ENCODE measurements at regions of chr1 and their contacts with region 1.

Region 1: GRCh38 chr1:33349778-33350610 is 29.1 kb upstream of the A3GALT2 start:
- DNase-seq: peak; percentile 80
- H3K4me3 Mint-ChIP-seq: peak overlapping the region; percentile 92
- H3K27ac Mint-ChIP-seq: peak overlapping the region; percentile 91
- H3K4me1 Mint-ChIP-seq: peaks cover 42% of the 10 kb centered on the region
- H3K27me3 Mint-ChIP-seq: peaks cover under 1% of the 10 kb centered on the region

Region 2: DNA sequence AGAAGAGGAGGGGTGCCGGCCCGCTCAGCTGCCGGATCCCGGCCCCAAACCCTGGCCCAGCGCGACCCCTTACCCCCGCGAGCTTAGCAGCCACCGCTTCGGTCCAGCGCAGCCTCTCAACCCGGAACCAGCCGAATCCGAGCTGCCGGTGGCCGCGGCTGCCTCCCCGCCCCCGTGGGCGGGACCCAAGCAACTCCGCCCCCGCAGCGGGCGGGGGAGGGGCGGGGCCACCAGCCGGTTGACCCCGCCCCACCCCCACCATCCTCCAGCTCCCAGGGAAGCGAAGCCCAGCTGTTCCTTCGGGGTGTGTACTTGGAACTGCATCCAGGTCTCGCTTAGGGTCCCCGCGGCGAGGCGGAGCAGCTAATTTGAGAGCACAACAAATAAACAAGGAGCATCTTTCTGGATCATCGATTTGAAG is 168.1 kb before region 1 on chr1 and contains the start of gene TRIM62:
- intact Hi-C with region 1: loop called (anchors 1 kb)
- DNase-seq: peak; percentile 69
- H3K4me3 Mint-ChIP-seq: peak within 1 kb of the TSS; percentile 87
- H3K27ac Mint-ChIP-seq: peak within 1 kb of the TSS; percentile 81
- H3K4me1 Mint-ChIP-seq: peaks cover 28% of the 10 kb centered on the region
- H3K27me3 Mint-ChIP-seq: peaks cover 19% of the 10 kb centered on the region
- total RNA-seq, gene TRIM62: 4.1 and 4.5 TPM in 2 replicates

Region 3: DNA sequence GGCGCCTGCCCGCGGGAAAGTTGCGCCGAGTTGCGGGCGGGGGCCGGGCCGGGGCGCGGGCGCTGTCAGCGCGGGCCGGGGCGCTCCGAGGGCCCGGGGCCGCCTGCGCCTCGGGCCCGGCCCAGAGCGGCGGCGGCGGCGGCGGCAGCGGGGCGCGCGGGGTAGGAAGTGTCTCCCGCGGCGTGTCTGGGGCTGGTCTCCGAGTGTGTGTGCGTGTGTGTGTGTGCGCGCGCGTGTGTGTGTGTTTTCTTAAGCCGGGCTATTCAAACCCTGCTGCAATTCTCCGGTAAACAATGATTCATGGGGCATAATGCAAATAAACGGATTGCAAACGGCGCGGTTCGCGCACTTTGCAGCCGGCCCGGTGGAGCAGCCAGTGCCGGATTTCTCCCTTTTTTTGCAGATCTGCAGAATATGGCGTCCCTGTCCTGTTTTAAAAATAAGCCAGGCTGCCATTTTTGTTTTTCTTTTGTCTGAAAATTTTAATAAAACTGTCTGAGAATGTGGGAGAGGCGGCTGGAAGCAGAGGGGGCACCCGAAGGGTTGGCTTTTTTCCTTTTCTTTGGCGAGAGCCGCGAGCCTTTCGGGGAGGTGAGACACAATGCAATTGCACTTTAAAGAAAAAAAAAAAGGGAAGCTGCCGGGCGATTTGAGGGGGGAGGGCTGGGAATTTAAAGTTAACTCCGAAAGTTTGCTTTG is 93.1 kb before region 1 on chr1:
- intact Hi-C with region 1: loop called (anchors 2 kb)
- DNase-seq: peak; percentile 41
- H3K4me3 Mint-ChIP-seq: peak overlapping the region; percentile 92
- H3K27ac Mint-ChIP-seq: peak overlapping the region; percentile 98
- H3K4me1 Mint-ChIP-seq: peaks cover 34% of the 10 kb centered on the region
- H3K27me3 Mint-ChIP-seq: peaks cover 11% of the 10 kb centered on the region

Region 4: DNA sequence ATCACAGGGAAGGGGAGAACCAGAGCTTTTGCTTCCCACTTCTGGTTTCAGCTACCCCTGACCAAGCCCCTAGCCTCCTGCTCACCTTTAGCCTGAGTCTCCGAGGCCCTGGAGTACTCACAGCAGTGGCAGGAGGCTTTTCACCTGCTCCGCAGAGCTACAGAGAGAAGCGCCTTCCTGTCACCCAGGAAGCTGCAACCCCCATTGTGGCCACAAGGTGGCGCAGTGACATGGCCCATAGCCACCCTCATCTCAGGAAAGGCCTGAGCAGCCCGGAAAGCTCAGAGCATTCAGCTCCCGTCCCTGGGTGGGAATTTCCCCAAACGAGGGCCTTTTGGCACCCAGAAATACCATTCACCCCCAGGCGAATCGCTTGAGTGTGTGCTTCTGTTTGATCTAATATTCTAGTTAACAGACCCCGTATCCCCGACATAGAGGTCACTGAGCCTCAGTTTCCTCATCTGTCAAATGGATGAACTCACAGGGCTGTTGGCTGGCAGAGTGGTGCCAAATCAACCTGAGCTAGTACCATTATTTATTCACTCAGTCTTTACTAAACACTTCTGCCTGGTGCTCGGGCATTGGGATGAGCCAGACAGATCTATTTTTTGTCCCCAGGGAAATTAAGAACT is 54.4 kb before region 1 on chr1:
- intact Hi-C with region 1: loop called (anchors 1 kb)
- DNase-seq: peak; percentile 79
- H3K4me3 Mint-ChIP-seq: no peak overlapping the region
- H3K27ac Mint-ChIP-seq: no peak overlapping the region
- H3K4me1 Mint-ChIP-seq: peaks cover 8% of the 10 kb centered on the region
- H3K27me3 Mint-ChIP-seq: no peaks in the 10 kb centered on the region

Region 5: GRCh38 chr1:33306648-33307493 is 43.1 kb before region 1 on chr1:
- intact Hi-C with region 1: no loop called
- DNase-seq: no peak
- H3K4me3 Mint-ChIP-seq: no peak overlapping the region
- H3K27ac Mint-ChIP-seq: no peak overlapping the region
- H3K4me1 Mint-ChIP-seq: peaks cover 24% of the 10 kb centered on the region
- H3K27me3 Mint-ChIP-seq: peaks cover 24% of the 10 kb centered on the region

Region 6: GRCh38 chr1:33367485-33368405 is 17.8 kb after region 1 on chr1:
- intact Hi-C with region 1: loop called (anchors 1 kb)
- DNase-seq: peak; percentile 73
- H3K4me3 Mint-ChIP-seq: no peak overlapping the region
- H3K27ac Mint-ChIP-seq: no peak overlapping the region
- H3K4me1 Mint-ChIP-seq: no peaks in the 10 kb centered on the region
- H3K27me3 Mint-ChIP-seq: peaks cover 2% of the 10 kb centered on the region

Region 7: GRCh38 chr1:33430692-33431593 is 80.9 kb after region 1 on chr1 and contains the start of gene PHC2:
- intact Hi-C with region 1: loop called (anchors 1 kb)
- DNase-seq: peak; percentile 82
- H3K4me3 Mint-ChIP-seq: peak within 1 kb of the TSS; percentile 57
- H3K27ac Mint-ChIP-seq: no peak within 1 kb of the TSS
- H3K4me1 Mint-ChIP-seq: peaks cover 4% of the 10 kb centered on the region
- H3K27me3 Mint-ChIP-seq: peaks cover 26% of the 10 kb centered on the region
- total RNA-seq, gene PHC2: 36.7 and 40.1 TPM in 2 replicates